Activated naive CD4-positive, alpha-beta T cell treated with anti-CD3 and anti-CD28 coated beads for 36 hours (primary cell): ENCODE measurements at regions of chr22 and their contacts with region 1.

Region 1: DNA sequence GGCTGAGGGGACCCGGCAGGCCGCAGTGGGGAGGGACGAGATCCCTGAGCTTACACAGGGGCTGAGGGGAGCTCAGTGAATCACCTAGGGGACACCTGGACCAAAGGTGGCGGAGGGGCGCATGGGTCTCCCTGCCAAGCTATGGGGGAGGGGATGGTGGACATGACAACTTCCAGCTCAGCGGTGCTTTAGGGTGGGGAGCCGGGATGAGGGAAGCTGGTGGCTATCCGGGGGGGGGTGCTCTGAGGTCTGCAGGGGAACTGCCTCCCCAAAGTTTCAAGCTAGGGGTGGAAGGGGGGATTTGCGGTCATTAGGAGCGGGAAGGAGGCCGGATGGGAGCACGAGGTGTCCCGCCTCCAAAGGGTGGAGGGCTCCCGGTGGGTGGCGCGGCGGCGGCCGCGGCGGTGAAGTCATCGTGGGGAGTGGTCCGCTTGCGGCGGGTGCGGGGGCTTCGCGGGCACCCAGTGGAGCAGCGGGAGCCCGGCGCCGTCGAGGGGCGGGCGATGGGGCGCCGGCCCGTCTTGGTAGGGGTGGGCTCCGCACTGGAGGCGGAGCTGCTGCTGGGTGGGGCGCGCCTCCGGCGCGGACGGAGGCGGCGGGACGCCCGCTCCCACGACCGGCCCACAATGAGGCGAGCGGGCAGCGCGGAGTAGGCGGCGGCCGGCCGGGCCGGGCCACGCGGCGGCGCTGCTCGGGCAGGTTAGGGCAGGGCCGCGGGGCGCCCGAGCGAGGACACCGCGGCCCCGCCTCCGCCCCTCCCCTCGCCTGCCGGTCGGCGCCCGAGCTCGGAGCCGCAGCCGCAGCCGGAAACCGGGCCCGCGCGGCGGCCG is at the start of gene MICALL1:
- DNase-seq: peak; percentile 71
- H3K4me3 Mint-ChIP-seq: peak within 1 kb of the TSS; percentile 73
- H3K27ac Mint-ChIP-seq: peak within 1 kb of the TSS; percentile 70
- H3K4me1 Mint-ChIP-seq: peaks cover 29% of the 10 kb centered on the region
- H3K27me3 Mint-ChIP-seq: no peaks in the 10 kb centered on the region
- total RNA-seq, gene MICALL1: 12.0 to 12.9 TPM

Region 2: GRCh38 chr22:37920126-37920525 is 14.4 kb after region 1 on chr22:
- CTCF ChIA-PET with region 1: no interaction called
- intact Hi-C with region 1: loop called (anchors 2 kb)
- DNase-seq: no peak
- H3K4me3 Mint-ChIP-seq: peak overlapping the region; percentile 18
- H3K27ac Mint-ChIP-seq: peak overlapping the region; percentile 78
- H3K4me1 Mint-ChIP-seq: peaks cover 6% of the 10 kb centered on the region
- H3K27me3 Mint-ChIP-seq: no peaks in the 10 kb centered on the region

Region 3: GRCh38 chr22:37965940-37966664 is 60.4 kb after region 1 on chr22:
- CTCF ChIA-PET with region 1: no interaction called
- intact Hi-C with region 1: loop called (anchors 1 kb)
- DNase-seq: no peak
- H3K4me3 Mint-ChIP-seq: no peak overlapping the region
- H3K27ac Mint-ChIP-seq: no peak overlapping the region
- H3K4me1 Mint-ChIP-seq: no peaks in the 10 kb centered on the region
- H3K27me3 Mint-ChIP-seq: no peaks in the 10 kb centered on the region